Activated CD4-positive, alpha-beta T cell treated with anti-CD3 and anti-CD28 coated beads for 36 hours (primary cell): ENCODE measurements at regions of chr11 and their contacts with region 1.

Region 1: DNA sequence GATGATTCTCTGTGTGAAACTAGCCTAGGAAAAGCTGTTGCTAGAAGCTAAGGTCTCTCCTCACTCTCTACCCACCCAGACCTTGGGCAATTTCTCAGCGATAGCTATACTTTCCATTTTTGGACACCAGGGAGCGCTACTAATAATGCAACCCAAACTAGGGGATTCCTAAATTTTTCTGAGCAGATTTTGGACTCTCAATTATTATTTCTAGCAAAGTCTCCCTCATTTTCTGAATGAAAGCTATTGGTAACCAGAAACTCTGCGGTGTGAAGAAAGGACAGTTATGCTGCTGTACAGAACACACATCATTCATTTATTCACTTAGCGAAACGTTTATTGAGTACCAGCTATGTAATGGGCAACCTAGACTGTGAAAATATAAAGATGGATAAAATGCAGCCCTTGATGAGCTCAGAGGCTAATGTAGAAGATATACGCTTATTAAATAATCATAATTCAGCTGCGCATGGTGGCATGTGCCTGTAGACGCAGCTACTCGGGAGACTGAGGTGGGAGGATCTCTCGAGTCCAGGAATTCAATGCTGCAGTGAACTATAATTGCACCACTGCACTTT is 6.1 kb upstream of the STIM1 start:
- DNase-seq: peak; percentile 60
- ATAC-seq: peak; percentile 60
- H3K4me3 Mint-ChIP-seq: no peak overlapping the region
- H3K27ac Mint-ChIP-seq: peak overlapping the region; percentile 1
- H3K4me1 Mint-ChIP-seq: peaks cover 43% of the 10 kb centered on the region
- H3K27me3 Mint-ChIP-seq: no peaks in the 10 kb centered on the region

Region 2: DNA sequence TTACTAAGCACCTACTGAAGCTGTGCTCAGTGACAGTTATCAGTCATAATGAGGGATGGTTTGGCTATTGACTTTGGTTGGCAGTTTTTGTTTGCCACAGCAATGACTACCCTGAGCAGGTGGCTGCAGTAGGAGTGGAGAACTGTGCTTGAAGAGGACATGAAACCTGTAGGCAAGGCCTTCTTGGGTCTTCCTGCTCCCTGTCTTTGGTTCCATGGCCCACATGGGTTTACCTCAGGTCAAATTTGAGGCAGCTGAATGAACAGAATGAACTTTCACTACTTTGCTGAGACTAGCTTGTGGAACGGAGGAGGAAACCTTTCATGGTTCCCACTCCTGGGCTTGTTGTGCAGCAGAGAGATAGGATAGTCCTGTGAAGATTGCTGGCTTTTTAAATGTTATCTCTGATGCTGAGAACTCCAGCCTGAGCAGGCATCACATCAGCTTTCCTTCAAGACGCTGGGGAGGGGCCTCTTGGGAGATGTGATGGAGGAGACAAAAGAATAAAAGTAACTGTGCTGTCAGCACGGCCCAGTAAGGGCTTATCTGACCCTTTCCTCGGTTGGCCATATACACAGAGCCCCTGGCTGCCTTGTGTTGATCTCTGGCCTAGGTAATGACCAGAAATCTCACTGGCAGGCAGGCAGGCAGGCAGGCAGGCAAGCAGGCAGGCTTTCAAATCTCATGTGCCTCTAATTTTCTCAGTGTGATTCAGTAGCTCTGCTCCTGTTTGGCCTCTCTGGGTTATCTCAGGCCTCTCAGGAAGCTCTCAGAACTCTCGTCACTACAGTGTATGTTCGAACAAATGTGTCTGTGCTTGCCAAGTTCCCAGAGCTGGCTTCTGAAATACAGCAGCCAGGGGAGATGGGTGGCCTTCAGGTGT is 18.1 kb after region 1 on chr11:
- CTCF ChIA-PET with region 1: interaction called, 18 read pairs
- POLR2A ChIA-PET with region 1: interaction called, 9 read pairs
- intact Hi-C with region 1: loop called in 1 of 2 experiments (anchors 2 kb)
- DNase-seq: peak; percentile 61
- ATAC-seq: peak; percentile 70
- H3K4me3 Mint-ChIP-seq: peak overlapping the region; percentile 25
- H3K27ac Mint-ChIP-seq: peak overlapping the region; percentile 92
- H3K4me1 Mint-ChIP-seq: peaks cover 90% of the 10 kb centered on the region
- H3K27me3 Mint-ChIP-seq: no peaks in the 10 kb centered on the region

Region 3: DNA sequence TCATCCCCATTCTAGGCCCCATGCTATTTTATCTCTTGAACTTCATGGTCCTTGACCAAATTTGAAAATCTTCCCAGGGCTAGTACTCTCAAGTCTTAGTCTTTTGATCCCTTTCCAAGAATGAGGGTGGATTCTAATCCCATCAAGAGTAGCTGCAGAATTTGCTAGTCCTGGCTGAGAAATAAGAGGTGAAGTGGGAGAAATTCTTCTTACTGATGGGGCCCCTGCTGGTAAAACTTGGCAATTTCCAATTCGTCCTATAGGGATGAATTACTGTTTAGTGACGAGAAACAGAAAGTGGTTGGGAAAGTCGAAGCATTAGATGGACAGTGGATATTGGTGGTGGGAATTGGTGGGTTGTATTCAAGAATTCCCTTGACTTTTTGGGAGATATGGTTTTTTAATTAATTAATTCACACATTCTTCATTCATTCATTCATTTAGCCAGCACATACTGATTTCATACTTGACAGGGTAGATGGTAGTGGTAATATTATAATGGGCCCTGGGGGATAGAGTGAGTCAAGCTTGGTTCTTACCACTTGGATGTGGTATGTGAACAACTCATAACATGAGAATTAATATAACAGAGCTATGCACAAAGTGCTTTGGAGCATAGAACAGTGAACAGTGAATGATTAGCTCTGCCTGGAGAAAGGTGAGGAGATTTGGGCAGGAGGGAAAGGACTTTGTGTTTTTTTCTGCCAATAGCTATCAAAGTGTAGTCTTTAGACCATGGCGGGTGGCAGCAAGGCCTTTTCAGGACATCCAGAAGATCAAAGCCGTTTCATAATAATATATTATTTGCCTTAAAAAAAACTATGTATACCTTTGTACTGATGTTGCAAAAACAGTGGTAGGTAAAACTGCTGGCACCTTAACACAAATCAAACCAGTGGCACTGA is 109.9 kb after region 1 on chr11:
- CTCF ChIA-PET with region 1: interaction called, 13 read pairs
- POLR2A ChIA-PET with region 1: no interaction called
- intact Hi-C with region 1: loop called (anchors 2 kb)
- DNase-seq: no peak
- ATAC-seq: peak; percentile 73
- H3K4me3 Mint-ChIP-seq: no peak overlapping the region
- H3K27ac Mint-ChIP-seq: peak overlapping the region; percentile 10
- H3K4me1 Mint-ChIP-seq: peaks cover 87% of the 10 kb centered on the region
- H3K27me3 Mint-ChIP-seq: no peaks in the 10 kb centered on the region

Region 4: GRCh38 chr11:3984896-3985295 is 135.5 kb after region 1 on chr11:
- CTCF ChIA-PET with region 1: interaction called, 18 read pairs
- POLR2A ChIA-PET with region 1: no interaction called
- intact Hi-C with region 1: loop called (anchors 2 to 10 kb)
- DNase-seq: peak; percentile 76
- ATAC-seq: peak; percentile 85
- H3K4me3 Mint-ChIP-seq: no peak overlapping the region
- H3K27ac Mint-ChIP-seq: peak overlapping the region; percentile 49
- H3K4me1 Mint-ChIP-seq: peaks cover 75% of the 10 kb centered on the region
- H3K27me3 Mint-ChIP-seq: no peaks in the 10 kb centered on the region

Region 5: GRCh38 chr11:4065601-4066377 is 216.4 kb after region 1 on chr11:
- CTCF ChIA-PET with region 1: interaction called, 299 read pairs
- POLR2A ChIA-PET with region 1: interaction called, 4 read pairs
- intact Hi-C with region 1: no loop called
- DNase-seq: no peak
- ATAC-seq: no peak
- H3K4me3 Mint-ChIP-seq: no peak overlapping the region
- H3K27ac Mint-ChIP-seq: peak overlapping the region; percentile 63
- H3K4me1 Mint-ChIP-seq: peaks cover 59% of the 10 kb centered on the region
- H3K27me3 Mint-ChIP-seq: no peaks in the 10 kb centered on the region

Region 6: GRCh38 chr11:4134844-4135243 is 285.5 kb after region 1 on chr11:
- CTCF ChIA-PET with region 1: no interaction called
- POLR2A ChIA-PET with region 1: no interaction called
- intact Hi-C with region 1: no loop called
- DNase-seq: no peak
- ATAC-seq: no peak
- H3K4me3 Mint-ChIP-seq: no peak overlapping the region
- H3K27ac Mint-ChIP-seq: no peak overlapping the region
- H3K4me1 Mint-ChIP-seq: no peaks in the 10 kb centered on the region
- H3K27me3 Mint-ChIP-seq: no peaks in the 10 kb centered on the region